ENCODE measurements at regions of chr2 and their contacts with region 1.

Region 1: DNA sequence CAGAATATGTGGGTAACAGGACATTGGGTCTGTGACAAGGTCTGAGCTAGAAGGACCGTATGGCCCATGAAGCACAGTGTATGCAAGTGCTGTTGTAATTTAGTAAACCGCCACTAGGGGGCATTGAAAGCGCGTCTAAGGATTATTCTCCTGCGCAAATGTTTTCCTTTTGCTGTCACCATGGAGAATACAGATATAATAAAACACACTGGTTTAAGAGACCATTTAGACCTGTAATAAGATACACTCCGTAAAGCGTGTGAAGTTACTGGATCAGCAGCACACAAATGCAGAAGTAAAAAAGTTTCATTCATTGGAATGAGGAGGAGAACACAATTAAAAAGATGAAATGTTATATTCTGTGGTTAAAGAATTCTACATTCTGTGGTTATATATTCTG is 272.4 kb downstream of the AGAP1 start:
- DNase-seq: peak; percentile 57
- H3K4me3 ChIP-seq: no peak overlapping the region
- H3K27ac ChIP-seq: no peak overlapping the region
- H3K27me3 ChIP-seq: no peaks in the 10 kb centered on the region
- CTCF ChIP-seq: peak; percentile 87

Region 2: GRCh38 chr2:235149240-235149659 is 617.0 kb before region 1 on chr2:
- CTCF ChIA-PET with region 1: no interaction called
- POLR2A ChIA-PET with region 1: no interaction called
- DNase-seq: no peak
- H3K4me3 ChIP-seq: no peak overlapping the region
- H3K27ac ChIP-seq: no peak overlapping the region
- H3K27me3 ChIP-seq: peaks cover 44% of the 10 kb centered on the region
- CTCF ChIP-seq: no peak

Region 3: GRCh38 chr2:235527806-235528469 is 238.3 kb before region 1 on chr2:
- CTCF ChIA-PET with region 1: no interaction called
- POLR2A ChIA-PET with region 1: no interaction called
- DNase-seq: no peak
- H3K4me3 ChIP-seq: no peak overlapping the region
- H3K27ac ChIP-seq: no peak overlapping the region
- H3K27me3 ChIP-seq: no peaks in the 10 kb centered on the region
- CTCF ChIP-seq: no peak

Region 4: GRCh38 chr2:235754352-235755207 is 11.7 kb before region 1 on chr2:
- CTCF ChIA-PET with region 1: interaction called, 26 read pairs
- POLR2A ChIA-PET with region 1: no interaction called
- DNase-seq: no peak
- H3K4me3 ChIP-seq: no peak overlapping the region
- H3K27ac ChIP-seq: no peak overlapping the region
- H3K27me3 ChIP-seq: no peaks in the 10 kb centered on the region
- CTCF ChIP-seq: no peak

Region 5: DNA sequence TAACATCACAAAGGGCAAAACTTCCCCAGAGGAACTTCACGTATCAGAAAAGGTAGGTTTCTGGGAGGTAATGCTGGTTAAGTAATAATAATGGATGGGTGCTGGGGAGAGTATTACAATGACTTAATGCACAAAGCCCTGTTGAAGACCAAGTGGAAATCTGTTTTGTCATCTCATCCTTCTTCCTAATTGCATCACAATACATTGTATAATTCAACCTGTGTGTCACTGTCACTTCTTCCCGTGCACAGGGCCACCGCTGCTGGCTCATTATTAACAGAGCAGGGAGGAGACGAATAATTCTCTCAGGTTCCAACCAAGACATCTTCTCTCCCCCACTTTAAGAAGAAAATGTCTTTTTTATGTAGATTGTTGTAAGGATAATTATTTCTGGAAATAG is 18.5 kb after region 1 on chr2:
- CTCF ChIA-PET with region 1: interaction called, 66 read pairs
- POLR2A ChIA-PET with region 1: no interaction called
- DNase-seq: no peak
- H3K4me3 ChIP-seq: no peak overlapping the region
- H3K27ac ChIP-seq: no peak overlapping the region
- H3K27me3 ChIP-seq: no peaks in the 10 kb centered on the region
- CTCF ChIP-seq: no peak